ENCODE measurements at regions of chr2 and their contacts with region 1.

Region 1: GRCh38 chr2:70919672-70920366 is 15.9 kb upstream of the ATP6V1B1 start:
- DNase-seq: peak; percentile 63
- H3K27ac ChIP-seq: no peak overlapping the region
- CTCF ChIP-seq: peak; percentile 79

Region 2: DNA sequence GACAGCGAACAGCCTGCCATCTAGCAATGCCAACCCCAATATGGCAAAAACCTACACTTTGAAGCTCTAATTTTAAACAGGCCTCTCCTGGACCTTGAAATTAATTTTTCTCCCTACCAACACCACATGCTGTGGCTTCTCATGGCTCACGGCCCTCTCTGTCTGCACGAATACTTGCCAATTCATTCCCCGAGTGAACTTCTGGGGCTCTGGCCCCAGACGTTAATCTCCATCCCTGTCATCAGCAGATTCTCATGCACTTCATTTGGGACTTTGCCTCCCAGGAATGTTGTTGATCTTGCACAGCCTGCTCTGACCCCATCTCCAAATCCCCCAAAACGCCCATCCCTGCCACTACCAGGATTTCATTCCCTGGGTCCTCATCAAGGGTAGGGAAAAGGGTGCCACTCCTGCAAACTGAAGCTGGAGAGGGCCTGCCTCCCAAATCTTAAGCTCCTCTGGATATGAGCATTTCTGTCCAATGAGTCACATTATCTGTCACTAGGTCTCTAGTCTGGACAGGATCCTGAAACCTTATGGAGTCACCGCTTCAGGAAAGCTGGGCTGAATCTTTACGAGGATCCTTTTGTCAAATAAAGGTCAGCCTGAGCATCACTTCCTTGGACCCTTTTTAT is 139.8 kb before region 1 on chr2:
- CTCF ChIA-PET with region 1: no interaction called
- POLR2A ChIA-PET with region 1: no interaction called
- DNase-seq: peak; percentile 38
- H3K27ac ChIP-seq: no peak overlapping the region
- CTCF ChIP-seq: no peak

Region 3: DNA sequence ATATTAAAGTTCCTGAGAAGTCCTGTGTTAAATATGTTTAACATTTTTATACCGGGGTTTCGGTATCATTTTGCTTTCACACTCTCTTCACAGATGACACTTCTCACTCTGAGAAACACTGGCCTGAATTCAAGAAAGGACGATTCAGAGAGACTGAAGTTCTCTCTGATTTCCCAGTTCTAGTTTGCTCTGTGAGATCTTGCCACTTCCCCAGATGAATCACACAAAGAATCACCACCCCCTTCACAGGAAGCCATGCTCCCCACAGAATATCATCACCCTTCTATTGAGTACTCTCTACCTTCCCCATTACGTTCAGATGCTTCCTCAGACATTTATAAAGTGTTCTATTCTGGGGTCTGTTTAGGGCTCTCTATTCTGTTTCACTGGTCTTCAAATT is 68.1 kb before region 1 on chr2:
- CTCF ChIA-PET with region 1: no interaction called
- POLR2A ChIA-PET with region 1: no interaction called
- DNase-seq: no peak
- H3K27ac ChIP-seq: no peak overlapping the region
- CTCF ChIP-seq: no peak

Region 4: DNA sequence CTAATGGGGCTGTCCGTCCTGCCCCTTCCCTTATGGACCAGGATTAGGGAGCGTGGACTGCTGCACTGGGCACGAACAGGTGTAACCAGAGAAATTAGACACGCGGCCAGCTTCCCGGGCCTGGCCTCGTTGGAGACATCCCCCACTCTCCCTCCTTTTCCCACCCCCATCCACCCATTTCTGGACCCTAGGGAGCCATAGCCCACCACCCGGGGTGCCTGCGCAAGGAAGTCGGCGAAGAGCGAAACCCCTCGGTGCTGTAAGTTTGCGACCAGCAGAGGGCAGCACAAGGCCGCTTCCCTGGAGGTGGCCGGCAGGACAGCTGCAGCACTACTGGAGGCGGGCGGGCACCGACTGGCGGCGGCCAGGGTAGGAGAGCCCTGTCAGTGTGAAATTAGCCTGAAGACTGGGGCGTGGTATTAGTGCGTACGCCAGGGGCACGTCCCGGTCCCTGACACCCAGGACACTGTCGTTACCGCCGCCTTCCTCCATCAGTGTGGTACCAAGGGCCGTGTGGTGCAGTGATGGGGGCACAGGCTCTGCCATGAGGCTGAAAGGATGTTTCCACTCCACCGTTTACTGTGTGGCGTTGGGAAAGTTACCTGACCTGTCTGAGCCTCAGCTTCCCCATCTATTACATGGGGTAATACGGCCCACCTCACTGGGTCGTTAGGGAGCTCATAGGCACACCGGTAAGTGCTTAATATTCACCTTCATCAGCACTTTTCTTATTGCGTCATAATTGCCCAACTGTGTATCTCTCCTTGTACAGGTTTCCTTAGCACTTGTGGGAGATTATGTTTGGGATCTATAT is 48.2 kb before region 1 on chr2:
- CTCF ChIA-PET with region 1: interaction called, 23 read pairs
- POLR2A ChIA-PET with region 1: no interaction called
- DNase-seq: peak; percentile 78
- H3K27ac ChIP-seq: no peak overlapping the region
- CTCF ChIP-seq: peak; percentile 88